HepG2 (cell line): ENCODE measurements at regions of chr6 and their contacts with region 1.

Region 1: DNA sequence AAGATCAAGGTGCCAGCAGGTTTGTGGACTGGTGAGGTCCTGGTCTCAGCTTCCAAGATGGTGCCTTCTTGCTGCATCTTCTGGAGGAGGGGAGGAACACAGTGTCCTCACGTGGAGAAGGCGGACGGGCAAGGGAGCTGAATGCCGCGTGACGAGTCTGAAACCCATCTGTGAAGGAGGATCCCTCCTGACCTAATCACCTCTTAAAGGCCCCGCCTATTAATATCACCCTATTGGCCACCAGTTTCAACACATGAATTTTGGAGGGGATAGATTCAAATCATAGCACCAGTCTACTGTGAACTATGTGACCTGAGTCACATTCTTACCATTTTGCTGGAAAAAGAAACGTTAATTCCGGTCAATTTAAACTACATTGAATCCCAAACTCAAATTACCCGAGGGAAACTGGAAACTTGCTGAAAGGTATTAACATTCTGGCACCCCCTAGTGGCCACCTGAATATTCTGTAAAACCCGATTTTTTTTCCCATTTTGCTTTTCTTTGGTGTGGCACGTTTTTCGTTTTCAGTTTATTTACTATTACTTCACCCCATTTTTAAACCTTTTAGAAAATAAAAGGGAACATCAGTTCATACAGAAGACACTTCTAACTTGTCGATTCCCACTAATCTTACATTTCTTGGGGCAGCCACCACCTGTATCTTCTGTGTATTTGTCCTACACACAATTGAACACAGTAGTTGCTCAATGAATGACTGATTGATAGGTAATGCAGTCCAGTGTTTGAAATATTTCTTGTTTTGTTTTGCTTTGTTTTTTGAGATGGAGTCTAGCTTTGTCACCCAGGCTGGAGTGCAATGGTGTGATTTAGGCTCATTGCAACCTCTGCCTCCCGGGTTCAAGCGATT is 17.9 kb upstream of the CCDC170 start:
- DNase-seq: peak; percentile 57
- ATAC-seq: peak; percentile 72
- H3K4me3 ChIP-seq: peak overlapping the region in 2 of 3 experiments; percentile 18 to 38; a peak in 2 of 6 replicates
- H3K27ac ChIP-seq: no peak overlapping the region
- H3K4me1 ChIP-seq: peaks cover 11% of the 10 kb centered on the region
- H3K27me3 ChIP-seq: no peaks in the 10 kb centered on the region
- CTCF ChIP-seq: peak; percentile 75
- EP300 ChIP-seq: no peak
- POLR2A ChIP-seq: no peak
- RAD21 ChIP-seq: peak; percentile 54; the same call in 1 of the 2 replicates

Region 2: GRCh38 chr6:151409260-151409659 is 66.6 kb before region 1 on chr6:
- CTCF ChIA-PET with region 1: interaction called, 15 read pairs
- POLR2A ChIA-PET with region 1: no interaction called
- in situ Hi-C with region 1: loop called (anchors 10 kb)
- intact Hi-C with region 1: loop called (anchors 1 kb)
- DNase-seq: no peak
- ATAC-seq: no peak
- H3K4me3 ChIP-seq: no peak overlapping the region
- H3K27ac ChIP-seq: no peak overlapping the region
- H3K4me1 ChIP-seq: no peaks in the 10 kb centered on the region
- H3K27me3 ChIP-seq: no peaks in the 10 kb centered on the region
- CTCF ChIP-seq: no peak
- EP300 ChIP-seq: no peak
- POLR2A ChIP-seq: no peak
- RAD21 ChIP-seq: no peak

Region 3: GRCh38 chr6:151430886-151431285 is 45.0 kb before region 1 on chr6:
- CTCF ChIA-PET with region 1: interaction called, 7 read pairs
- POLR2A ChIA-PET with region 1: no interaction called
- in situ Hi-C with region 1: no loop called
- intact Hi-C with region 1: loop called (anchors 1 kb)
- DNase-seq: peak; percentile 47
- ATAC-seq: peak; percentile 91
- H3K4me3 ChIP-seq: no peak overlapping the region
- H3K27ac ChIP-seq: no peak overlapping the region
- H3K4me1 ChIP-seq: peaks cover 2% of the 10 kb centered on the region; the same call in 1 of the 2 replicates
- H3K27me3 ChIP-seq: no peaks in the 10 kb centered on the region
- CTCF ChIP-seq: peak; percentile 64
- EP300 ChIP-seq: no peak
- POLR2A ChIP-seq: no peak
- RAD21 ChIP-seq: no peak